SK-N-SH (cell line): ENCODE measurements at regions of chr12 and their contacts with region 1.

Region 1: DNA sequence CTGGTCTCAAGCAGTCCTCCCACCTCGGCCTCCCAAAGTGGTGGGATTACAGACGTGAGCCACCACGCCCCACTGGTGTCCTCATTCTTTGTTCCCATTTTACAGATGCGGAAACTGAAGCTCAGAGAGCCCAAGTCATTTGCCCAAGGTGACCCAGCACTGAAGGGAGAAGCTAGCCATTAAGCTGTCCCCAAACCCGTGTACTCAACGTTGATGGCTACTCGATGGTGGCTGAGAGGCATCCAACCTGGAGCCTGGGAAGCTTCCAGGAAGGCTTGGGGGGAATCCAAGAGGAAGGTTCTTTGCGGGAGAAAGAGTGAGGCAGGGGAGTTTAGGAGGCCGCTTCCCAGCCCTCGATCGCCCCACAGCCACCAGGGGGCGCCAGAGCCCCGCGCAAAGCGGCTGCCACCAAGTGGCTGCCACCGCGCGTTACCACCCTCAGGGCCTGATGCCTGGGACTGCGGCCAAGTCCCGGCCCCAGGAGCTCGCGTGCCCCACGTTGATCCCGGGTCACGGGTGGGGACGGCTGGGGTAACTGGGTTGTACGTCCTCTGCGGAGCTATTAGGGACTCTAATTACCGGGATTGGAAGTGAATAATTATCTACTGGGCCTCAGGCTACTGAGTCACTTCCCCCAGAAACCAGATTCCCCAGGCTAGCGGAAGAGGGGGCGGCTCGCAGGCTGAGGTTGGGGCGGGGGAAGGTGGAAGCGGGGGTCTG is 8.8 kb upstream of the SH2B3 start:
- DNase-seq: peak; percentile 92
- H3K4me3 ChIP-seq: peak overlapping the region; percentile 30 to 63
- H3K27ac ChIP-seq: no peak overlapping the region; a peak in 1 of 4 replicates
- H3K4me1 ChIP-seq: peaks cover 0 to 9% of the 10 kb centered on the region in 2 experiments; a peak in 2 of 4 replicates
- H3K27me3 ChIP-seq: no peaks in the 10 kb centered on the region
- CTCF ChIP-seq: peak; percentile 97
- EP300 ChIP-seq: peak in 1 of 2 experiments; percentile 8; a peak in 1 of 4 replicates
- RAD21 ChIP-seq: peak; percentile 91

Region 2: DNA sequence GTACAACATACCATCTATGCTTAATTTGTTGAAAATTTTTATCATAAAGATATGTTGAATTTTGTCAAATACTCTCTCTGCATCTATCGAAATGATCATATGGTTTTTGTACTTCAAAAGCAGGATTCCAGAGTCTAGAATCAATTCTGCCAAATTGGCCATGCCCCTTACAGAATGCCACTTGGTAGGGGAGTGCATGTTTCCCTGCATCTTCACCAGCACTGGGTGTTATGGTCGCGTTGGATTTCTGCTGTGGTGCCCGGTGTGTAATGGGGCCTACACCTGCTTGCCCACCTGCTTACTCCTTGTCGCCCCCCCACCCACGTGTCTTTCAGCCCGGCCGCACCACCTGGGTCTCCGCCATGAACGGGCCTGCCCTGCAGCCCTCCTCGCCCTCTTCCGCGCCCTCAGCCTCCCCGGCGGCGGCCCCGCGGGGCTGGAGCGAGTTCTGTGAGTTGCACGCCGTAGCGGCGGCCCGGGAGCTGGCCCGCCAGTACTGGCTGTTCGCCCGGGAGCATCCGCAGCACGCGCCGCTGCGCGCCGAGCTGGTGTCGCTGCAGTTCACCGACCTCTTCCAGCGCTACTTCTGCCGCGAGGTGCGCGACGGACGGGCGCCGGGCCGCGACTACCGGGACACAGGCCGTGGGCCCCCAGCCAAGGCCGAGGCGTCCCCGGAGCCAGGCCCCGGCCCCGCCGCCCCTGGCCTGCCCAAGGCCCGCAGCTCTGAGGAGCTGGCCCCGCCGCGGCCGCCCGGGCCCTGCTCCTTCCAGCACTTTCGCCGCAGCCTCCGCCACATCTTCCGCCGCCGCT is 21.1 kb after region 1 on chr12:
- CTCF ChIA-PET with region 1: interaction called, 98 read pairs
- POLR2A ChIA-PET with region 1: no interaction called
- DNase-seq: no peak
- H3K4me3 ChIP-seq: no peak overlapping the region
- H3K27ac ChIP-seq: no peak overlapping the region
- H3K4me1 ChIP-seq: peaks cover 8 to 19% of the 10 kb centered on the region in 2 experiments; a peak in 3 of 4 replicates
- H3K27me3 ChIP-seq: no peaks in the 10 kb centered on the region
- CTCF ChIP-seq: no peak
- EP300 ChIP-seq: no peak
- RAD21 ChIP-seq: no peak

Region 3: DNA sequence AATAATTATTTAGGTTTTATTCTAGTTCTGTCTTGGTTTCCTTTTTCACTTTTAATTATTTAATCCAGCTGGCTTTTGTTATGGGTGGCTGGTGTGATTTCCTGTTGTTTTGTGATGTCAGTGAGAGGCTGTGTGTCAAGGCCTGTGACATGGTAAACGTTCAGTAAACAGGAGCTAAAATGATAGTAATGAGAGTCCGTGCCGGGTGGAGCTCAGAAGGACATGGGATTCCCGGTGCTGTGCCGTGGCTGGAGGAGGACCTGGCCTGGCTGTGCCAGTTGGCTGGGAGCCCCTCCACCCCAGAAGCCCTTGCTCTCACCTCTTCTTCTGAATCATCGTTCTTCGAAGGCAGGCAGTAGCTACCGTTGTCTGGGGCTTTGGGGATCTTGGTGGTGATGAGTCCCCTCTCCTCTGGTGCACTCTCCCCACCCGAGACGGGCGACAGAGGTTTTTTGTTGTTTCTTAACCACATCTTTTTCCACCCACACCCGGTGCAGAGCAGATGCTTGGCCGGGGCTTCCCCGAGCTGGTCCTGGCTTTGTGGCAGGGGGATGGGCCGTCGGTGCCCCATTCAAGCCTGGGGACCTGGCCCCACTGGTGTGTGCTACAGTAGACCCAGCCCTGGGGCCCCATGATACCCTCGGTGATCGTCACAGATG is 37.9 kb after region 1 on chr12:
- CTCF ChIA-PET with region 1: interaction called, 618 read pairs
- POLR2A ChIA-PET with region 1: no interaction called
- DNase-seq: no peak
- H3K4me3 ChIP-seq: no peak overlapping the region
- H3K27ac ChIP-seq: peak overlapping the region; percentile 40 to 50; a peak in 3 of 4 replicates
- H3K4me1 ChIP-seq: peaks cover 30 to 61% of the 10 kb centered on the region in 2 experiments
- H3K27me3 ChIP-seq: no peaks in the 10 kb centered on the region
- CTCF ChIP-seq: no peak
- EP300 ChIP-seq: no peak
- RAD21 ChIP-seq: no peak

Region 4: GRCh38 chr12:111482462-111482861 is 85.6 kb after region 1 on chr12:
- CTCF ChIA-PET with region 1: interaction called, 16 read pairs
- POLR2A ChIA-PET with region 1: no interaction called
- DNase-seq: no peak
- H3K4me3 ChIP-seq: no peak overlapping the region
- H3K27ac ChIP-seq: no peak overlapping the region
- H3K4me1 ChIP-seq: no peaks in the 10 kb centered on the region
- H3K27me3 ChIP-seq: no peaks in the 10 kb centered on the region
- CTCF ChIP-seq: peak; percentile 46
- EP300 ChIP-seq: no peak
- RAD21 ChIP-seq: no peak

Region 5: DNA sequence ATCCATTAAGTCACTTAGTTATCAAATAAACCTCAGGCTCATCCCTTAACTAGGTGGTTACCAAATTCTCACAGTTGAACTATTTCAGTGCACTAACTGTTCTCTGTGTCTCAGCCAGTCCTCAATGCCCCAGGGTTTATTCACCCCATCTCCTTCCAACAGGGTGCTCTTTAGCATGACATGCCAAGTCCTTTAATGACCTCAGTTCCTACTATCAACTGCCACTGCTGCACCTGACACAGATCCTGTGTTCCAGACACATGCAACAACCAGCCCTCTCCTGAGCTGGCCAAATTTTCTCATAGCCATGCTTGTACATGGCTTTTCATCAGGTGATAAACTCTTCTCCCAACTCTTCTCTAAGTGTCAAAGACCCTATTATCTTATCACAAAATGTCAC is 122.2 kb after region 1 on chr12:
- CTCF ChIA-PET with region 1: interaction called, 12 read pairs
- POLR2A ChIA-PET with region 1: no interaction called
- DNase-seq: no peak
- H3K4me3 ChIP-seq: no peak overlapping the region
- H3K27ac ChIP-seq: no peak overlapping the region
- H3K4me1 ChIP-seq: no peaks in the 10 kb centered on the region
- H3K27me3 ChIP-seq: no peaks in the 10 kb centered on the region
- CTCF ChIP-seq: no peak
- EP300 ChIP-seq: no peak
- RAD21 ChIP-seq: no peak

Region 6: GRCh38 chr12:111673503-111673902 is 276.6 kb after region 1 on chr12:
- CTCF ChIA-PET with region 1: interaction called, 13 read pairs
- POLR2A ChIA-PET with region 1: no interaction called
- DNase-seq: peak; percentile 37
- H3K4me3 ChIP-seq: no peak overlapping the region
- H3K27ac ChIP-seq: no peak overlapping the region
- H3K4me1 ChIP-seq: no peaks in the 10 kb centered on the region
- H3K27me3 ChIP-seq: no peaks in the 10 kb centered on the region
- CTCF ChIP-seq: peak; percentile 61
- EP300 ChIP-seq: no peak
- RAD21 ChIP-seq: peak; percentile 68